PC-9 (cell line): ENCODE measurements at regions of chr11 and their contacts with region 1.

Region 1: DNA sequence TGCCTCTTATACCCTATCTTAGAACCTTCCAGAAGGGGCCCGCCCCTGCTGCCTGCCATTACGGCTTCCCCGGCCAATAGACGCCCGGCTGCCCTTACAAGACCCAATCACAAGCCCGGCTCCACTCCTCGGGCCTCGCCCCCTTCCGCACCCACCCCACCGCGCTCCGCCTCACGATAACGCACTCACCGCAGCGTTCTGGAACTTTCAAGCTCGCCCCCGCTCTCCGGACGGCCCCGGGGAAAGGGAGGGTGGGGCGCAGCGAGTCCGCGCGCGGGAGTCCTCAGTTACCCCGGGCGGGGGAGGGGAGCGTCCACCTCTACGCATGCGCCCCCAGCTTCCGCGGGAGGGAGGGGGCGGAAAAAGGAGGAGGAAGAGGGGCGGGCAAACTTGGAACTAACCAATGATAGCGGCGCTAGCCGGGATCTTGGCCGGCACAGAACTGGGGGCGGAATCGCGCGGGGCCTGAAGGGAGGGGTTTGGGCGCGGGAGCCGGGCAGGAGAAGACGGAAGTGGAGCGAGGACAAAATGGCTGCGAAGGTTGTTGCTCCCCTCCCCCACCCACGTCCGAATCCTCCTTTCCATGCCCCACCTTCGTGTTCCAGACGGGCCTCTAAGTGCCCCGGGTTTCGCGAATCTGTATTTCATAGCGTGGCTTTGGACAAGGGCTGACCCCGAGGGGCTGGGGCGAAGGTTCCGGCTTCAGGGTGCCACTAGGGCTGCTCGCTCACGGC is 389 bp upstream of the HSPA8 start:
- DNase-seq: peak; percentile 97 to 99
- H3K4me3 ChIP-seq: peak overlapping the region; percentile 97
- H3K27ac ChIP-seq: peak overlapping the region; percentile 96
- H3K4me1 ChIP-seq: peaks cover 53% of the 10 kb centered on the region
- H3K27me3 ChIP-seq: no peaks in the 10 kb centered on the region
- CTCF ChIP-seq: no peak

Region 2: GRCh38 chr11:122189229-122189628 is 873.1 kb before region 1 on chr11:
- CTCF ChIA-PET with region 1: no interaction called
- POLR2A ChIA-PET with region 1: interaction called, 12 read pairs
- intact Hi-C with region 1: no loop called
- DNase-seq: peak; percentile 25 to 90
- H3K4me3 ChIP-seq: no peak overlapping the region
- H3K27ac ChIP-seq: peak overlapping the region; percentile 87
- H3K4me1 ChIP-seq: peaks cover 49% of the 10 kb centered on the region
- H3K27me3 ChIP-seq: no peaks in the 10 kb centered on the region
- CTCF ChIP-seq: no peak

Region 3: DNA sequence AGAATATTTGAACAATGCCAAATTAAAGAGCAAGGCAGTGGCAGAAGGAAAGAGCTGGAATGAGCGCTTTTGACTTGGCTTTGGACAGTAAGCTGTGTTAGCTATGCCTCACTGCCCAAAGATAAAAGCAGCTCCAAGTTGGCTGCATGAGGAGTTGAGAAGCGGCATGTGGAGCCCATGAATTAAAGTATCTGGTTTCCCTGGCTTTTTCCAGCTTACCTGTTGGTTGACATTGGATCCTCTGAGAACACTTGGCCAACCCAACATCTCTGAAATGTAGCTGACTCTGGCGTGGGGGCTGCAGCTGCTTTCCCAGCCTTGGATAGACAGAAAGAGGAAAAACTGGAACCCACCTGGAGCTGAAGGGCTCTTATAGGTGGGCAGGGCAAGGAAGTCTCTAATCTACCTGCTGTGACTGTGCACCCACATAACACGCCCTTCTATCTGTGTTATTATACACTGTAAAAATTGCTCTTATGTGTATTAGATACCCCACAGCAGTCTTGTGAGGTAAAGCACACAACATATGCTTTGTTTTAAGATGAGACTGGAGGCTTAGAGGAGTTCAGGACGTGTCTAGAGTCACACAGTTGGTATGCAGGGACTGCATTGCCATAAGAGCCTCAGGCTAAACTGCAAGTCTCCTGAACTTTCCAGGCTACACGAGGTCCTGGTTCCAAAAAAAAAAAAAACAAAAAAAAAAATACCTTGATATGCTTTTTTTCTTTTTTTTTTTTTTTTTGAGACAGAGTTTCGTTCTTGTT is 401.0 kb before region 1 on chr11:
- CTCF ChIA-PET with region 1: no interaction called
- POLR2A ChIA-PET with region 1: interaction called, 11 read pairs
- intact Hi-C with region 1: no loop called
- DNase-seq: peak; percentile 64 to 100
- H3K4me3 ChIP-seq: peak overlapping the region; percentile 39; the same call in 1 of the 2 replicates
- H3K27ac ChIP-seq: peak overlapping the region; percentile 91
- H3K4me1 ChIP-seq: peaks cover 87% of the 10 kb centered on the region
- H3K27me3 ChIP-seq: no peaks in the 10 kb centered on the region
- CTCF ChIP-seq: no peak

Region 4: GRCh38 chr11:123072332-123072761 is 10.0 kb after region 1 on chr11:
- CTCF ChIA-PET with region 1: no interaction called
- POLR2A ChIA-PET with region 1: interaction called, 3 read pairs
- intact Hi-C with region 1: loop called (anchors 1 kb)
- DNase-seq: peak; percentile 89 to 97
- H3K4me3 ChIP-seq: no peak overlapping the region
- H3K27ac ChIP-seq: peak overlapping the region; percentile 55
- H3K4me1 ChIP-seq: peaks cover 19% of the 10 kb centered on the region
- H3K27me3 ChIP-seq: no peaks in the 10 kb centered on the region
- CTCF ChIP-seq: no peak

Region 5: DNA sequence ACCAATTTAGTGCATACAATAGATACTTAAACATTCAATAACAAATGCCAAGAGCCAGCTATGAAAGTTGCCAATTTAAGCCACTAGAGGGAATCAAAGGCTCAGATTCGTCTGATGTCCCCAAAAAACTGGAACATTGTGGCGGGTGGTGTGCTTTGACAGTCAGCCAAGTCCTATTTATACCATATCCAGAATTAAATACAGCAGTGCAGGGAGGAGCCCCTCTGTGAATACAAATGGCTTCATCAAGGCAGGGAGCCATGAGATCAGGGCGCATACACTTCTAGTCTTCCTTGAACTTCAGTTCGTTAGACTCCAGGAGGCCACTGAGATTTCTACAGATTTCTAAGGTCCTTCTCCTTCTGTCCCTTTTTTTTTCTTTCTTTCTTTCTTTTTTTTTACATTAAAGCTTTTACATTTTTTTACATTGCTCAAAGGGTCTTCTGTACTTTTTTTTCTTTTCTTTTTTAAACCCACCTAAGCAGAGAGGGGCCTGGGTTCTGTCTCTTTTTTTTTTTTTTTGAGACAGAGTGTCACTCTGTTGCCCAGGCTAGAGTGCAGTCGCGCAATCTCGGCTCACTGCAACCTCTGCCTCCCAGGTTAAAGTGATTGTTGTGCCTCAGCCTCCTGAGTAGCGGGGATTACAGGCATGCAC is 41.1 kb after region 1 on chr11:
- CTCF ChIA-PET with region 1: interaction called, 5 read pairs
- POLR2A ChIA-PET with region 1: no interaction called
- intact Hi-C with region 1: loop called (anchors 5 kb)
- DNase-seq: peak; percentile 33 to 60
- H3K4me3 ChIP-seq: no peak overlapping the region
- H3K27ac ChIP-seq: no peak overlapping the region
- H3K4me1 ChIP-seq: no peaks in the 10 kb centered on the region
- H3K27me3 ChIP-seq: no peaks in the 10 kb centered on the region
- CTCF ChIP-seq: peak; percentile 82

Region 6: GRCh38 chr11:123775289-123775688 is 713.0 kb after region 1 on chr11:
- CTCF ChIA-PET with region 1: no interaction called
- POLR2A ChIA-PET with region 1: no interaction called
- intact Hi-C with region 1: no loop called
- DNase-seq: no peak
- H3K4me3 ChIP-seq: no peak overlapping the region
- H3K27ac ChIP-seq: no peak overlapping the region
- H3K4me1 ChIP-seq: no peaks in the 10 kb centered on the region
- H3K27me3 ChIP-seq: no peaks in the 10 kb centered on the region
- CTCF ChIP-seq: no peak